ENCODE measurements at regions of chr5 and their contacts with region 1.

Region 1: GRCh38 chr5:177446200-177447065 is at the start of gene PRR7:
- DNase-seq: peak in 1 of 2 experiments; percentile 81
- H3K4me3 ChIP-seq: peak within 1 kb of the TSS; percentile 46 to 74 (median 64)
- H3K27ac ChIP-seq: peak within 1 kb of the TSS; percentile 59
- H3K4me1 ChIP-seq: peaks cover 0 to 30% (median 15%) of the 10 kb centered on the region in 4 experiments; a peak in 6 of 7 replicates
- H3K27me3 ChIP-seq: peaks cover 0 to 13% (median 5%) of the 10 kb centered on the region in 4 experiments; a peak in 5 of 7 replicates
- CTCF ChIP-seq: no peak
- EP300 ChIP-seq: no peak
- POLR2A ChIP-seq: peak in 1 of 2 experiments; percentile 75; a peak in 2 of 3 replicates
- RAD21 ChIP-seq: no peak
- total RNA-seq, gene PRR7: 8.0 and 8.6 TPM in 2 replicates

Region 2: DNA sequence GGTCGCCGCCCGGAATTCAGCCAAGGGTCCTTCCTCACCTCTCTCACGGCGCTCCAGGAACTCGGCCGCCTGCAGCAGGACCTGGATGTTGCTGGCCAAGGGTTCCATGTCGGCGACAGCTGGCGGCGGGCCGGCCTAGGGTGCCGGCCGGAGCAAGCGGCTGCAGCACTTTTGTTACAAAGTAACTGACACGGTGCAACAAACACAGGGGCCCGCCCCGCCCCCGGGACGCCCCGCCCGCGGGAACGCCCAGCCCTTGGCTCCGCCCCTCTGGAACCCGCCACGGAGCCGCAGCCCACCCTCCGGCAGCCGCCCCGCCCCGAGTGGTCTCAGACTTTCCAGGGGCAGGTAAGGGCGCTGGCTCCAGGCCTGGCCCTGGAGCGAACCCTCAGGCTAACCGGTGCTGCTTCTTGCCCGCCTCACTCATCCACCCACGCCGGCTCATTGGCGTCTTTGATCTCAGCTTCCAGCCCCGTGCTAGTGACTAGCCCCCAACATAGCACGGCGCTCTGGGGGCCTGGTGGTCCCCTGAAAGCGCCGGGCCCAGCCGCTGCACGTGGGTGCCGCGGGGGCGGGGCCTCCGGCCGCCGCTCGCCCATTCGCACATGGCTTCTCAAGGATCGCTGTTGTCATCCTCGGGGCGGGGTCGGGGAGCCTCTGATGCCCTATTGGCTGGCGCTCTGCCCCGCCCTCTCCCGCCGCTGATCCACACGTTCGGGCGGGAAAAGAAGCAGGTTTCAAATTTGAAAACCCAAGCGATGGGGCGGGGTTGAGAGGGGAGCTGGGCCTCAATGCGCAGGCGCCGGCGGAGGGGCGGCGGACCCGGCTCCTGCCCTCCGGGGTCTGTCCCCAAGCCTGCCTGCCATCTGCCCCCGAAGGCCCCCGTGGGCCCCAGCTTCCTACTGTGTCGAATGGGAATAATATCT is 134.4 kb before region 1 on chr5 and contains the start of gene MXD3:
- CTCF ChIA-PET with region 1: interaction called, 60 read pairs
- POLR2A ChIA-PET with region 1: interaction called, 10 read pairs
- DNase-seq: peak; percentile 95 to 98
- H3K4me3 ChIP-seq: peak within 1 kb of the TSS; percentile 52 to 75 (median 67)
- H3K27ac ChIP-seq: peak within 1 kb of the TSS; percentile 89
- H3K4me1 ChIP-seq: peaks cover 0 to 19% (median 14%) of the 10 kb centered on the region in 4 experiments; a peak in 6 of 7 replicates
- H3K27me3 ChIP-seq: no peaks in the 10 kb centered on the region
- CTCF ChIP-seq: no peak
- EP300 ChIP-seq: no peak
- POLR2A ChIP-seq: peak in 1 of 2 experiments; percentile 60; a peak in 2 of 3 replicates
- RAD21 ChIP-seq: no peak
- total RNA-seq, gene MXD3: 7.7 and 10.3 TPM in 2 replicates

Region 3: DNA sequence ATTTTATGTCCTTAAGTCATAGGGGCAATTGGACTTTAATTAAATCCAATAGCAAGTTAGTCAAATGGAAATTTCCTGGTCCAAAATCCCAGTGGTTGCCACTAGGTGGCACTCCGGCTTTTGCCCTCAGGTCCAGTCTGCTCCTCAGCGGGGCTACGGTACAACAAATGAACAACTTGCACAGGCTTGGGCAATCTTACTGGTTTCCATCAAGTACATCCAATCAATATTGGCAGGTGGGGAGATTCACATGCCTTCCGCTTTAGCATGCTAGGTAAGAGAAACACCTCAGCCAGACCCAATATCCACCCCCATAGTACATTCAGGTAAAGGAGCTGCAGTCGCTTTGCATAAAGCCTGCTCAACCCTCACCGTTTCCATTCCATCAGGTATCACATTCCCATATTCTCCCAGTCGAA is 128.5 kb before region 1 on chr5:
- CTCF ChIA-PET with region 1: interaction called, 16 read pairs
- POLR2A ChIA-PET with region 1: interaction called, 10 read pairs
- DNase-seq: peak in 1 of 2 experiments; percentile 87
- H3K4me3 ChIP-seq: no peak overlapping the region
- H3K27ac ChIP-seq: no peak overlapping the region
- H3K4me1 ChIP-seq: peaks cover 0 to 4% (median 1%) of the 10 kb centered on the region in 4 experiments; a peak in 4 of 7 replicates
- H3K27me3 ChIP-seq: no peaks in the 10 kb centered on the region
- CTCF ChIP-seq: peak in 2 of 3 experiments; percentile 85 to 89; a peak in 3 of 4 replicates
- EP300 ChIP-seq: no peak
- POLR2A ChIP-seq: no peak
- RAD21 ChIP-seq: peak; percentile 87 to 90

Region 4: DNA sequence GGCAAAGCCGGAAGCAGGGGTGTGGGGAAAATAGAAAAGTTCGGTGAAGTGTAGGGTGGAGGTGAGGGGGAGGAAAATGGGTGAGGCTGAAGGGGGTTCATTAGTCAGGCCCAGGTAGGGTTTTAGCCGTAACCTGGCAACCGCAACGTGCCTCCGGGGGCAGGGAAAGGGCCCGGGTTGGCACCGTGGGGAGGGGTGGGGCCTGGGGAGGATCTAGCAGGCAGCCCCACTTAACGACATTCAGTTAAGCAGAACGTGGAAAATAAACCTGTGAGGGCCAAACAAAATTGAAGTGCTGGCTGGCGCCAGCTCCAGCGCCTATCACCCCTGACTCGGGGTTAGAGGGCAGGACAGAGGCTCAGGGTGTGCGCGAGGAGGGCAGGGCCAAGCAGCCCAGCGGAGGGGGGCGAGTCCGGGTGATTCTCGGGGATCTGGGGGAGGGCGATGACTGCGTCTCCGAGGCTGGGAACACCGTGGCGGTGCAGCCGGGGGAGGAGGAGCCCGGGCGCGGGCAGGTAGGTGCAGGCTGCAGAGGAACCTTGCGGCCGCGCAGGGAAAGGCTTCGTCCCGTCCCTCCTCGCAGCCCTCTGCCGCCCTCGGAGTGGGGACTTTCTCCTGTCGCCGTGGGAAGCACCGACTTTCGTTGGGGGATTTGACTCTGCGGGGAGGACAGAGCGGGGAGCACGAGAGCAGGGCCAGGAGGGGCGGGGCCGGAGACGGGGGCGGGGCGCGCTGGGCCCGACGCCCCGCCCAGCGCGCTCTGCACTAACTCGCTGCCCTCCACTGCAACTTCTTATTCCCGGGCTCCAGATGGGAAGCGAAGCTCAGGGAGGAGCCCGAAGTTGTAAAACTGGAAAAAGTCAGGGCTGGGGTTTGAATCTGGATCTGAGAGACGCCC is 83.6 kb before region 1 on chr5:
- CTCF ChIA-PET with region 1: interaction called, 232 read pairs
- POLR2A ChIA-PET with region 1: interaction called, 17 read pairs
- DNase-seq: peak in 1 of 2 experiments; percentile 89
- H3K4me3 ChIP-seq: peak overlapping the region; percentile 43 to 69 (median 48)
- H3K27ac ChIP-seq: no peak overlapping the region
- H3K4me1 ChIP-seq: peaks cover 2 to 27% (median 22%) of the 10 kb centered on the region in 4 experiments
- H3K27me3 ChIP-seq: peaks cover 0 to 11% (median 9%) of the 10 kb centered on the region in 4 experiments; a peak in 4 of 7 replicates
- CTCF ChIP-seq: no peak
- EP300 ChIP-seq: no peak
- POLR2A ChIP-seq: 0 out of 3 replicates have a peak, but pooled peaks of 1 of the 2 experiments have one; percentile 16
- RAD21 ChIP-seq: no peak

Region 5: GRCh38 chr5:177370488-177371119 is 75.8 kb before region 1 on chr5:
- CTCF ChIA-PET with region 1: interaction called, 232 read pairs
- POLR2A ChIA-PET with region 1: interaction called, 18 read pairs
- DNase-seq: peak; percentile 93 to 99
- H3K4me3 ChIP-seq: peak overlapping the region; percentile 23 to 63 (median 58); a peak in 6 of 8 replicates
- H3K27ac ChIP-seq: 0 out of 2 replicates have a peak overlapping the region, but pooled peaks have one; percentile 60
- H3K4me1 ChIP-seq: peaks cover 8 to 36% (median 31%) of the 10 kb centered on the region in 4 experiments
- H3K27me3 ChIP-seq: peaks cover 1 to 14% (median 12%) of the 10 kb centered on the region in 4 experiments; a peak in 4 of 7 replicates
- CTCF ChIP-seq: peak in 2 of 3 experiments; percentile 79 to 98; a peak in 3 of 4 replicates
- EP300 ChIP-seq: no peak
- POLR2A ChIP-seq: 0 out of 3 replicates have a peak, but pooled peaks of 1 of the 2 experiments have one; percentile 16
- RAD21 ChIP-seq: peak; percentile 66 to 75

Region 6: DNA sequence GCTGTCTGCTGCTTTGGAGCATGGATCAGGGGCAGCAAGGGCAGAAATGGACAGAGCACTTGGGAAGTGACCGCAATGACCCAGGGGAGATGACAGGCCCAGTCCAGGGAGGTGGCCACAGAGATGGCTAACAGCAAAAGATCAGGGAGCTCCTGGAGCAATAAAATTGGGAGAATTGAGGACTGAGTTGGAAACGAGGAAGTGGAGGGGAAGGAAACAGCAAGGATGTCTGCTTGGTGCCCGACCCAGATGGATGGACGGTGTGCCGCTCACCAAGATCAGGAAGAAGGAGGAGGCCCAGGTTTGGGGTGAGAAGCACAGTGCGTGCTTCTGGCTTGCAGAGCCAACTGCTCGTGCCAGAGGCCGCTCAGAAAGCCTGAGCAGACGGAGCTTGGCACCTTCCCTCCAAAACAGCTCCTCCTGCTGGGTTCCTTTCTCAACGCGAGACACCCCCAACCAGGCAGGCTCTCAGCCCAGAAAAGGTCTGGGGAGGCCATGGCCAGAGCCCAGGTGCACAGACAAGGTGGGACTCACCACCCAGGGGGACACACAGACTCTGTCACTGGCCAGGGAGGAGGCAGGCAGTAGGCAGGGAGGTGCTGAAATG is 63.9 kb before region 1 on chr5:
- CTCF ChIA-PET with region 1: interaction called, 430 read pairs
- POLR2A ChIA-PET with region 1: interaction called, 51 read pairs
- DNase-seq: peak in 1 of 2 experiments; percentile 64
- H3K4me3 ChIP-seq: no peak overlapping the region
- H3K27ac ChIP-seq: no peak overlapping the region
- H3K4me1 ChIP-seq: peaks cover 0 to 12% (median 2%) of the 10 kb centered on the region in 4 experiments; a peak in 4 of 7 replicates
- H3K27me3 ChIP-seq: peaks cover 0 to 2% (median under 1%) of the 10 kb centered on the region in 4 experiments; a peak in 3 of 7 replicates
- CTCF ChIP-seq: peak in 2 of 3 experiments; percentile 37 to 59; a peak in 3 of 4 replicates
- EP300 ChIP-seq: no peak
- POLR2A ChIP-seq: no peak
- RAD21 ChIP-seq: peak; percentile 22 to 41; a peak in 2 of 4 replicates

Region 7: GRCh38 chr5:177425801-177426565 is 20.4 kb before region 1 on chr5:
- CTCF ChIA-PET with region 1: interaction called, 23 read pairs
- POLR2A ChIA-PET with region 1: interaction called, 460 read pairs
- DNase-seq: peak; percentile 97 to 100
- H3K4me3 ChIP-seq: peak overlapping the region; percentile 52 to 71 (median 64)
- H3K27ac ChIP-seq: peak overlapping the region; percentile 86; the same call in 1 of the 2 replicates
- H3K4me1 ChIP-seq: peaks cover 4 to 14% (median 9%) of the 10 kb centered on the region in 4 experiments; a peak in 6 of 7 replicates
- H3K27me3 ChIP-seq: no peaks in the 10 kb centered on the region
- CTCF ChIP-seq: no peak
- EP300 ChIP-seq: peak in 1 of 2 experiments; percentile 69; a peak in 1 of 3 replicates
- POLR2A ChIP-seq: peak in 1 of 2 experiments; percentile 95; a peak in 2 of 3 replicates
- RAD21 ChIP-seq: no peak

Measured in H1 (cell line).